Activated CD4-positive, alpha-beta memory T cell treated with anti-CD3 and anti-CD28 coated beads for 36 hours (primary cell): ENCODE measurements at regions of chr15 and their contacts with region 1.

Region 1: GRCh38 chr15:99424978-99425656 is 140.7 kb upstream of the MEF2A start:
- DNase-seq: peak; percentile 81
- H3K4me3 Mint-ChIP-seq: peak overlapping the region; percentile 4
- H3K27ac Mint-ChIP-seq: peak overlapping the region; percentile 70
- H3K4me1 Mint-ChIP-seq: peaks cover 54% of the 10 kb centered on the region
- H3K27me3 Mint-ChIP-seq: peaks cover 4% of the 10 kb centered on the region

Region 2: DNA sequence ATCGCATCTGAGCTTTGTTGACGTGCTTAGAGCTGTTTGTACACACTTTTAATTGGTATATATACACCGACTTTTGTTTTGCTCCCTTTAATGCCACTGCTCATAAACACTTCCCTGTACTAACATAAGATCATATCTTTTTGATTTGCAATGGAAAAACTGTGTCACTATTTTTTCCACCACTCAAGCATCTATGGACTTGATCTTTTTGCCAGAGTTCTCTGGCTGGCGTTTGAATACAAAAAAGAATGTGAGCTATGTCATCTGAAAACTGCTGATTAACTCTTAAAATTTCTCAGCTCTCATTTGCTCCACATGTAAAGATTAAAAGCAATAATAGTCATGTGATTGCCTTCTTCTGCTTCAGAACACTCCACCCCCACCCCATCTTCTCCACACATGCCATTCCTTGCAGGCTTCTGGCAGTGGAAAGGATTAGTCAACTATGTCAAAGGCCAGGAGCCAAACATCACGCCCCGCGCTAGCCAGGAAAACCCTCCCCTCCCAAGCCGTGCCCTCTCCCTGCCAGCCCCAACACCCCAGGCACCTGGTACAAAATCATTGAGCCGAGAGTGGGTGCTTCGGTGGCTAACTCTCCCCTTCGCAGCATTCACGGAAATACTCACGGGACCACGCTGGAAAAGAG is 17.3 kb after region 1 on chr15:
- CTCF ChIA-PET with region 1: no interaction called
- POLR2A ChIA-PET with region 1: no interaction called
- intact Hi-C with region 1: loop called (anchors 2 kb)
- DNase-seq: no peak
- H3K4me3 Mint-ChIP-seq: no peak overlapping the region
- H3K27ac Mint-ChIP-seq: no peak overlapping the region
- H3K4me1 Mint-ChIP-seq: peaks cover 27% of the 10 kb centered on the region
- H3K27me3 Mint-ChIP-seq: no peaks in the 10 kb centered on the region

Region 3: DNA sequence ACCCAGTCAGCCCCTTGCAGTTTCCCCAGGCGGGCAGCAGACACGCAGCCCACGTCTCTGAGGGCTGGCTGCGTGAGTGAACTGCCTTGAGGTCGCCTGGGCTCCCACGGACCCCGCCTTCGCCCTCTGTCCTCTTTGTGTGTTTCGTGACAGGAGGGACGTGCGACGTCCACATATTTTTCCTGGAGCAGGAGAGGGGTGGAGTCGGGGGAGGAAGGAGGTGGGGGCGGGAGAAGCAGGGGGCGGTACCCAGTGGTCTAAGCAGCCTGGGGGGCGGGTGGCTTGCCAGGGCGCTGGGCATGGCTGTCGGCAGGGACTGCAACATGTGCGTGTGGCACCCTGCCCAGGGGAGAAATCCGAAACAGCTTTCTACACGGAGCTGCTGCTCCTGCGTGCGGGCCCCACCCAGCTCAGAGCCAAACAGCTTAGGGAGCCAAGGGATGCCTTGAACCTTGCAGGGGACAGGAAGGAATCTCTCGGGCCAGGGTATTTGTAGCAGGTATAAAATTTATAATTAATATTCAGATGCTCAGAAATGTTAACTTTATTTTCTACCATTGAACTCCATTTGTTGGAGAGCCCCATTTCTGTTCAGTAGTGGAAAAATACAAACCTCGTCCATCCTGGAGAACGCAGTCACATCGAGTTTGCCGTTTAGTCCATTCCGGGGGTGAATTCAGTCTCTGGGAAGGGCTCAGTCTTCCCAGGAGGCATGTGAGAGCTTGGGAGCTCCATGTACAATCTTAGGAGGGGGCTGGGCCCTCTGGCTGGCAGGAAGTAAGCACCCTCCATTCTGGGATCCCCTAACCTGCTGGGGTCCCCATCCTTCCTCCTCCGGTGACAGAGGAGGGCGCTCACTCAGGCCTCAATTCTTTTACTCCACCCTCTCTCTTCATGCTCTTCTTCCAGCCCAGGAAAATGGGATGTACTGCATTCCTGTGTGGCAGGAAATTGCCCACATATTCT is 61.5 kb after region 1 on chr15:
- CTCF ChIA-PET with region 1: no interaction called
- POLR2A ChIA-PET with region 1: no interaction called
- intact Hi-C with region 1: no loop called
- DNase-seq: no peak
- H3K4me3 Mint-ChIP-seq: no peak overlapping the region
- H3K27ac Mint-ChIP-seq: no peak overlapping the region
- H3K4me1 Mint-ChIP-seq: peaks cover 17% of the 10 kb centered on the region
- H3K27me3 Mint-ChIP-seq: peaks cover 16% of the 10 kb centered on the region

Region 4: GRCh38 chr15:99507504-99508310 is 82.6 kb after region 1 on chr15:
- CTCF ChIA-PET with region 1: no interaction called
- POLR2A ChIA-PET with region 1: interaction called, 3 read pairs
- intact Hi-C with region 1: loop called (anchors 2 kb)
- DNase-seq: no peak
- H3K4me3 Mint-ChIP-seq: no peak overlapping the region
- H3K27ac Mint-ChIP-seq: no peak overlapping the region
- H3K4me1 Mint-ChIP-seq: peaks cover 24% of the 10 kb centered on the region
- H3K27me3 Mint-ChIP-seq: no peaks in the 10 kb centered on the region